ENCODE measurements at regions of chr1 and their contacts with region 1.

Region 1: GRCh38 chr1:16366722-16367257 is at the start of gene SZRD1:
- DNase-seq: peak; percentile 98 to 99
- H3K4me3 ChIP-seq: peak within 1 kb of the TSS; percentile 83 to 92
- H3K27ac ChIP-seq: peak within 1 kb of the TSS; percentile 96
- H3K4me1 ChIP-seq: peaks cover 38% of the 10 kb centered on the region
- H3K27me3 ChIP-seq: no peaks in the 10 kb centered on the region
- CTCF ChIP-seq: no peak
- POLR2A ChIP-seq: no peak
- total RNA-seq, gene SZRD1: 52.3 TPM

Region 2: GRCh38 chr1:16206547-16207317 is 160.1 kb before region 1 on chr1:
- intact Hi-C with region 1: loop called (anchors 5 kb)
- DNase-seq: peak in 1 of 2 donors; percentile 98
- H3K4me3 ChIP-seq: peak overlapping the region; percentile 54 to 68
- H3K27ac ChIP-seq: peak overlapping the region; percentile 90
- H3K4me1 ChIP-seq: peaks cover 47% of the 10 kb centered on the region
- H3K27me3 ChIP-seq: no peaks in the 10 kb centered on the region
- CTCF ChIP-seq: no peak
- POLR2A ChIP-seq: peak in 1 of 2 donors; percentile 66

Measured in vagina (tissue), 2 donors.